Tibial artery (tissue), 4 donors: ENCODE measurements at regions of chr17 and their contacts with region 1.

Region 1: DNA sequence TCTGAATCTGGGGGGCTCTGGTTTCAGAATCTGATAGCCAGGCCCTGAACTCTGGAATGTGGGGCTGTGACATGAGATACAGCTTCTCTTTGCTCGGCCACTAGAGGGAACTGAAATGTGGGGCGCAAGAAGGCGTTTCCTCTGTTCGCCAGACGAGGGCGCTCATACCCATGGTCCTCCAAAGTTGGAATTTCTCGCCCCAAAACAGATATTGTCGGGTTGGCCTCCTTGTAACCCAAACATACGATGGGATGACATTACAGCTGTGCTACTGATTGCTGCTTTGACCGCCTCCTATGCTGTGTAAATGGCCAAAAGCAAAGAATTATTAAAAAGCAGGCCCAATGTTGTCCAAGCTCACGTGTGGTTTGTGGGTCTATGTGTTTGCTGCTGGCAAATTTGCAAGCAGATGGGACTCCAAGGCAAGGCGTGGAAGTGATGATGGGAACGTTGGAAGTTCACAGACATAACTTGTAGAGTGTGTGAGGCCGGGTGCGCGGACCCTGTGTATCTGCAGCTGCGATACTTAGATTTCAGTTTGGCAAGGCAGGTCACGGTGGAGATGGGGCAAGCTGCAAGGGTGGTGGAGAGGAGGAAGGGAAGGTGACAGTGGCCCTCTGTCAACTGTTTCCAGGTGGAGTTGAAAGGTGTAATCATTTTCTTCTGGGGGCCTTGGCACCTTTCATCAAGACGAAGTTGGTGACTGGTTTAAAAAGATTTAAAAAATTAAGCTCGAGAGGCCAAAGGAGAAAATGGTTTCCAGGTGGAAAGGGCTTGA is 13.0 kb upstream of the MSI2 start:
- DNase-seq: peak; percentile 40 to 78
- H3K4me3 ChIP-seq: no peak overlapping the region
- H3K27ac ChIP-seq: no peak overlapping the region
- H3K4me1 ChIP-seq: no peaks in the 10 kb centered on the region
- H3K27me3 ChIP-seq: peaks cover 0 to 16% of the 10 kb centered on the region in 2 donors
- CTCF ChIP-seq: peak; percentile 97 to 98

Region 2: GRCh38 chr17:56290101-56290801 is 953.1 kb before region 1 on chr17:
- intact Hi-C with region 1: no loop called
- DNase-seq: no peak
- H3K4me3 ChIP-seq: no peak overlapping the region
- H3K27ac ChIP-seq: no peak overlapping the region
- H3K4me1 ChIP-seq: peaks cover 0 to 7% (median 0%) of the 10 kb centered on the region in 4 donors
- H3K27me3 ChIP-seq: no peaks in the 10 kb centered on the region
- CTCF ChIP-seq: no peak

Region 3: GRCh38 chr17:57671667-57672632 is 428.6 kb after region 1 on chr17:
- intact Hi-C with region 1: loop called (anchors 5 kb)
- DNase-seq: peak; percentile 63 to 81
- H3K4me3 ChIP-seq: no peak overlapping the region
- H3K27ac ChIP-seq: no peak overlapping the region
- H3K4me1 ChIP-seq: peaks cover 0 to 7% (median 3%) of the 10 kb centered on the region in 4 donors
- H3K27me3 ChIP-seq: no peaks in the 10 kb centered on the region
- CTCF ChIP-seq: peak; percentile 86 to 93

Region 4: GRCh38 chr17:57747221-57748017 is 504.1 kb after region 1 on chr17:
- intact Hi-C with region 1: loop called (anchors 5 kb)
- DNase-seq: no peak
- H3K4me3 ChIP-seq: no peak overlapping the region
- H3K27ac ChIP-seq: no peak overlapping the region
- H3K4me1 ChIP-seq: no peaks in the 10 kb centered on the region
- H3K27me3 ChIP-seq: peaks cover 0 to 38% of the 10 kb centered on the region in 2 donors
- CTCF ChIP-seq: peak; percentile 60 to 68

Region 5: GRCh38 chr17:57833179-57833939 is 590.0 kb after region 1 on chr17:
- intact Hi-C with region 1: loop called (anchors 10 kb)
- DNase-seq: peak; percentile 70 to 87
- H3K4me3 ChIP-seq: peak overlapping the region; percentile 40 to 56
- H3K27ac ChIP-seq: peak overlapping the region; percentile 78 to 83
- H3K4me1 ChIP-seq: peaks cover 0 to 28% (median 17%) of the 10 kb centered on the region in 4 donors
- H3K27me3 ChIP-seq: no peaks in the 10 kb centered on the region
- CTCF ChIP-seq: peak; percentile 89 to 91